ENCODE measurements at regions of chr11 and their contacts with region 1.

Region 1: GRCh38 chr11:63478896-63479295 is 12.1 kb downstream of the PLAAT5 start:
- H3K4me3 ChIP-seq: no peak overlapping the region
- H3K27ac ChIP-seq: no peak overlapping the region
- H3K4me1 ChIP-seq: no peaks in the 10 kb centered on the region
- CTCF ChIP-seq: peak; percentile 32; the same call in 1 of the 2 replicates

Region 2: GRCh38 chr11:63490551-63491239 is 11.8 kb after region 1 on chr11 and contains the start of gene PLAAT5:
- CTCF ChIA-PET with region 1: interaction called, 15 read pairs
- POLR2A ChIA-PET with region 1: no interaction called
- H3K4me3 ChIP-seq: no peak within 1 kb of the TSS
- H3K27ac ChIP-seq: no peak within 1 kb of the TSS
- H3K4me1 ChIP-seq: no peaks in the 10 kb centered on the region
- CTCF ChIP-seq: no peak

Region 3: DNA sequence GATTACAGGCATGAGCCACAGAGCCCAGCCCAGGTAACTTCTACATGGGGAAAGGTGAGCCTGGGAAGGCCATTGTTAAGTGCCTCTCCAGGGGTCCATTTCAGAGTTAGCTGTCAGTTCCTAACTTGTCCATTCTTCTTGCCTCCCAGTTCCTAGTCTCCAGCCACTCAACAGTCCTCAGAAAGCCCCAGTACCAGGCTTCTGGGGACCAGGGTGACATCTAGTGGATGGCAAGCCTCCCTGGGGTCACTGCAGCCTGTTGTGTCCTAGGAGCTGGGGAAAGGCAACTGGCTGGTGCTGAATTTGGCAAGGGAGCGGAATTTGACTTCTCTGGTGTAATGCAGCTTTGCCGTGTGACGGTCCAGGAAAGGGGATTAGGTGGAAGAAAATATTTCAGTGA is 29.1 kb after region 1 on chr11:
- CTCF ChIA-PET with region 1: interaction called, 17 read pairs
- POLR2A ChIA-PET with region 1: no interaction called
- H3K4me3 ChIP-seq: no peak overlapping the region
- H3K27ac ChIP-seq: no peak overlapping the region
- H3K4me1 ChIP-seq: no peaks in the 10 kb centered on the region
- CTCF ChIP-seq: peak; percentile 36; the same call in 1 of the 2 replicates

Region 4: DNA sequence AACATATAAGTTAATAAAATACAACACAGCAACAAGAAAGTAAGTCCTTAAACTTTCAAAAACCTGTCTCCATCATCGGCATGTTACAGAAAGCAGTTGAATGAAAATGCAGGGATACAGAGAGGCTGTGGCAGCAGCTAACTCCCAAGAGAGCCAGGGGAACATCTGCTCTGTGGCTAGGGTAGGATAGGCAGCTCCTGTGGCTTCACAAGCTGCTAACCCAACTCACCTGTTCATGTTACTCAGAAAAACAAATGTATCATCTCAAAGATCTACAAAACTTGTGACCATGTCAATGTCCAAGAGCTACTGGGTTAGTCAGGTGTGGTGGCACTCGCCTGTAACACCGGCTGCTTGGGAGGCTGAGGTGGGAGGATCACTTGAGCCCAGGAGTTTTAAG is 150.5 kb after region 1 on chr11:
- CTCF ChIA-PET with region 1: interaction called, 10 read pairs
- POLR2A ChIA-PET with region 1: no interaction called
- H3K4me3 ChIP-seq: no peak overlapping the region
- H3K27ac ChIP-seq: no peak overlapping the region
- H3K4me1 ChIP-seq: no peaks in the 10 kb centered on the region
- CTCF ChIP-seq: no peak

Region 5: GRCh38 chr11:64263021-64263946 is 784.4 kb after region 1 on chr11:
- CTCF ChIA-PET with region 1: no interaction called
- POLR2A ChIA-PET with region 1: no interaction called
- H3K4me3 ChIP-seq: no peak overlapping the region
- H3K27ac ChIP-seq: no peak overlapping the region
- H3K4me1 ChIP-seq: no peaks in the 10 kb centered on the region; the same call in 1 of the 2 replicates
- CTCF ChIP-seq: no peak

Measured in HEK293 (cell line).